GM12878 (cell line): ENCODE measurements at regions of chr1 and their contacts with region 1.

Region 1: GRCh38 chr1:197876894-197877293 is 25.5 kb upstream of the C1orf53 start:
- DNase-seq: no peak
- ATAC-seq: no peak
- H3K4me3 ChIP-seq: no peak overlapping the region
- H3K27ac ChIP-seq: no peak overlapping the region
- H3K4me1 ChIP-seq: no peaks in the 10 kb centered on the region
- H3K27me3 ChIP-seq: no peaks in the 10 kb centered on the region
- CTCF ChIP-seq: no peak
- EP300 ChIP-seq: no peak
- POLR2A ChIP-seq: no peak
- RAD21 ChIP-seq: no peak

Region 2: DNA sequence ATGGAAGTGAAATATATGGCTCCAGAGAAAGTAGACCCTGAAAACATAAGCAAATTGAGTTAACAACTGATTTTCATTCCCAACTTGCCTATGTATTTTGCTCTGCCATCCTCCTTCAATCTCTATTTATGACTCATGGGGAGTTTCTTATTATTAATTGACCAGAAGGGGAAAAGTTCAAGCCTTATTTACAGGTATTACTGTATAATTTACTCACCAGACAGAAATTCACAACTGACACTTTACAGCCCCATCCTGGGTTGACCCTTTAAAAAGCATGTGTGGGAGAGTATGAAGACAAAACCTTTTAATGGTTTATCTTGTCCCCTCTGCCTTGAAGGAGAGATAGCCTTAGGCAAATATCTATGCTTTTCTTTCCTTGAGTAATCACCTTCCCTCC is 14.2 kb before region 1 on chr1:
- CTCF ChIA-PET with region 1: interaction called, 7 read pairs
- POLR2A ChIA-PET with region 1: no interaction called
- RAD21 ChIA-PET with region 1: no interaction called
- SMC1A ChIA-PET with region 1: no interaction called
- in situ Hi-C with region 1: no loop called
- intact Hi-C with region 1: loop called (anchors 1 kb)
- DNase-seq: no peak
- ATAC-seq: no peak
- H3K4me3 ChIP-seq: no peak overlapping the region
- H3K27ac ChIP-seq: no peak overlapping the region
- H3K4me1 ChIP-seq: no peaks in the 10 kb centered on the region
- H3K27me3 ChIP-seq: no peaks in the 10 kb centered on the region
- CTCF ChIP-seq: no peak
- EP300 ChIP-seq: no peak
- POLR2A ChIP-seq: no peak
- RAD21 ChIP-seq: no peak